Endothelial cell of umbilical vein (primary cell): ENCODE measurements at regions of chr15 and their contacts with region 1.

Region 1: DNA sequence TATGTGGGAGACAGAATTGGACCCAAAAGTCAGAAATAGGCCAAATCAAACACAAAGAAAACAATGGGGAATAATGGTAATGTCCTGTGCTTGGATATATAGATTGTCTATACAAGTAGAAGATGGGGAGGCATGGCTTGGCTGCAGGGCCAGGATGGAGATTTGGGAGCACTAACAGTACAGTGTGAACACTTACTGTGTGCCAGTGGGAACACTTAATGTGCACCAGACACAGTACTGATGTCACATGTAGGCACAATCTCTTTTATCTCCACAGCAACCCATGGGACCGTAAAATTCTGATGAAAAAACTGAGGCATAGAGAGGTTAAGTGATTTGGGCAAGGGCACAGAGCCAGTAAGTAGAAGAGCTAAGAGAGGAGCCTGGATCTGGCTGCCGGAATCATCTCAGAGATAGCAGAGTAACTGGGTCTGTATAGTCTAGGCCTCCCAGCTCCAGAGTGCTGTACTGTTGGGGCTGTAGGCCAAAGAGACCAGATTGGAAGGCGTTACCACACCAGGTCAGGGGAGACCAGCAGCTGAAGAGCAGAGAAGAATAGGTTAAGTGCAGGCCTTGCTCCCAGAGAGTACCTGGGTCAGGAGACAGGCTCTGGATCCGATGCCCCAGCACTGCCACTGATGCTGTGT is 63.3 kb downstream of the RLBP1 start:
- DNase-seq: no peak
- H3K4me3 ChIP-seq: no peak overlapping the region
- H3K27ac ChIP-seq: no peak overlapping the region
- H3K4me1 ChIP-seq: no peaks in the 10 kb centered on the region
- H3K27me3 ChIP-seq: no peaks in the 10 kb centered on the region
- CTCF ChIP-seq: no peak
- POLR2A ChIP-seq: no peak

Region 2: GRCh38 chr15:89041507-89041906 is 116.5 kb before region 1 on chr15:
- CTCF ChIA-PET with region 1: no interaction called
- POLR2A ChIA-PET with region 1: no interaction called
- dilution Hi-C with region 1: no loop called
- intact Hi-C with region 1: no loop called
- DNase-seq: no peak
- H3K4me3 ChIP-seq: no peak overlapping the region
- H3K27ac ChIP-seq: no peak overlapping the region
- H3K4me1 ChIP-seq: no peaks in the 10 kb centered on the region
- H3K27me3 ChIP-seq: no peaks in the 10 kb centered on the region
- CTCF ChIP-seq: no peak
- POLR2A ChIP-seq: no peak

Region 3: DNA sequence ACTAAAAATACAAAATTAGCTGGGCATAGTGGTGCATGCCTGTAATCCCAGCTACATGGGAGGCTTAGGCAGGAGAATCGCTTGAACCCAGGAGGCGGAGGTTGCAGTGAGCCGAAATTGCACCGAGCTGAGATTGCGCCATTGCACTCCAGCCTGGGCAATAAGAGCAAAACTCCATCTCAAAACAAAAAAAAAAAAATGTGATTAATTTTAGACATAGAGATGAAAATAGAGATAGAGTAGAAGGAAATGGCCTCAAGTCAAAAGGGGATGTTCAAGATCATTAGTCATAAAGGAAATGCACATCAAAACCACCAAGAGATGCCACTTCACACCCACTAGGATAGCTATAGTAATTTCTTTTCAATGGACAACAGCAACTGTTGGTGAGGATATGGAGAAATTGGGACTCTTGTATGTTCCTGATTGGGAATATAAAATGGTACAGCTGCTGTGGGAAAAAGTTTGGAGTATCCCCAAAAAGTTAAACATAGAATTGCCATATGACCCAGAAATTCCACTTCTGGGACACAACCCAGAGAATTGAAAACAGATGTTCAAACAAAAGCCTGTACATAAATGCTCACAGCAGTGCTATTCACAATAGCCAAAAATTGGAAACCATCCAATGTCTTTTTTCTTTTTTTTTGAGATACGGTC is 14.4 kb before region 1 on chr15:
- CTCF ChIA-PET with region 1: interaction called, 3 read pairs
- POLR2A ChIA-PET with region 1: interaction called, 10 read pairs
- dilution Hi-C with region 1: no loop called
- intact Hi-C with region 1: no loop called
- DNase-seq: peak; percentile 88
- H3K4me3 ChIP-seq: no peak overlapping the region
- H3K27ac ChIP-seq: peak overlapping the region; percentile 68
- H3K4me1 ChIP-seq: peaks cover 26% of the 10 kb centered on the region
- H3K27me3 ChIP-seq: no peaks in the 10 kb centered on the region
- CTCF ChIP-seq: no peak
- POLR2A ChIP-seq: no peak

Region 4: GRCh38 chr15:89472785-89473256 is 314.8 kb after region 1 on chr15:
- CTCF ChIA-PET with region 1: no interaction called
- POLR2A ChIA-PET with region 1: no interaction called
- dilution Hi-C with region 1: no loop called
- intact Hi-C with region 1: no loop called
- DNase-seq: peak; percentile 67
- H3K4me3 ChIP-seq: no peak overlapping the region
- H3K27ac ChIP-seq: no peak overlapping the region
- H3K4me1 ChIP-seq: no peaks in the 10 kb centered on the region
- H3K27me3 ChIP-seq: peaks cover 13 to 19% of the 10 kb centered on the region in 2 experiments
- CTCF ChIP-seq: peak; percentile 81 to 93
- POLR2A ChIP-seq: no peak